Activated CD4-positive, alpha-beta memory T cell treated with anti-CD3 and anti-CD28 coated beads for 36 hours (primary cell): ENCODE measurements at regions of chr12 and their contacts with region 1.

Region 1: GRCh38 chr12:7959701-7960121 is 23.7 kb upstream of the SLC2A3 start:
- DNase-seq: peak; percentile 68
- H3K4me3 Mint-ChIP-seq: peak overlapping the region; percentile 87
- H3K27ac Mint-ChIP-seq: peak overlapping the region; percentile 94
- H3K4me1 Mint-ChIP-seq: peaks cover 33% of the 10 kb centered on the region
- H3K27me3 Mint-ChIP-seq: no peaks in the 10 kb centered on the region

Region 2: GRCh38 chr12:7970475-7971252 is 11.0 kb after region 1 on chr12:
- CTCF ChIA-PET with region 1: interaction called, 31 read pairs
- POLR2A ChIA-PET with region 1: interaction called, 61 read pairs
- intact Hi-C with region 1: loop called (anchors 1 kb)
- DNase-seq: peak; percentile 92
- H3K4me3 Mint-ChIP-seq: peak overlapping the region; percentile 77
- H3K27ac Mint-ChIP-seq: peak overlapping the region; percentile 98
- H3K4me1 Mint-ChIP-seq: peaks cover 34% of the 10 kb centered on the region
- H3K27me3 Mint-ChIP-seq: no peaks in the 10 kb centered on the region

Region 3: DNA sequence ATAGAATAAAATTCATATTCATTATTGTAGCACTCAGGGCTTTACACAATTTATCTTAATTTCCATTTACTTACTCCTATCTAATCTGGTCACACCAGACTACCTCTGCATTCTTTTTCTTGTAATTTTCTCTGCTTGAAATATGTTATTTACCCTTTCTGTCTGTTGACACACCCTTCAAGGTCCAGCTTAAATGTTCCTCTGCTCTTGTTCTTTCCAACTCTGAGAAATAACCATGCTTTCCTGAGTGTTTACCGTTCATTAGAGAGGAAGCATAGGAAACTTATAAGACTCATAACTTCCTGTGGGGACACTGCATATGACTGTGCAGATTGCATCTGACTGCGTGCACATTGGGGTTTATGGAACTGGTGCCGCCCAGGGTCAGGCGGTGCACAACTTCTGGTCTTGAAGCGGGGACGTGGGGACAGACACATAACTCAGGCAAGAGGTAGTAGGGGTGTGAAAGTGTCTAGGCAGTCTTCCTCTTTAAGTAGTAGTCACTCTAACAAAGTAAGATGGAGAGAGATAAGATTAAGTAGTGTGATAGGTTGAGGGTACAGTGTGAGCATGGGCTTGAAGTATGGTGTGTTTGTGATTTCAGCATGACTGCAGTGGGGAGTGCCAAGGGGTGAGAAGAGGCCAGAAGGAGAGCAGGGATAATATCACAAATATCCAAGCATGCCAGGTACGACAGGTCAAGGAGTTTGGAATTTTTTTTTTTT is 30.3 kb after region 1 on chr12:
- CTCF ChIA-PET with region 1: interaction called, 32 read pairs
- POLR2A ChIA-PET with region 1: interaction called, 5 read pairs
- intact Hi-C with region 1: loop called (anchors 1 kb)
- DNase-seq: peak; percentile 90
- H3K4me3 Mint-ChIP-seq: peak overlapping the region; percentile 44
- H3K27ac Mint-ChIP-seq: peak overlapping the region; percentile 87
- H3K4me1 Mint-ChIP-seq: peaks cover 40% of the 10 kb centered on the region
- H3K27me3 Mint-ChIP-seq: no peaks in the 10 kb centered on the region

Region 4: DNA sequence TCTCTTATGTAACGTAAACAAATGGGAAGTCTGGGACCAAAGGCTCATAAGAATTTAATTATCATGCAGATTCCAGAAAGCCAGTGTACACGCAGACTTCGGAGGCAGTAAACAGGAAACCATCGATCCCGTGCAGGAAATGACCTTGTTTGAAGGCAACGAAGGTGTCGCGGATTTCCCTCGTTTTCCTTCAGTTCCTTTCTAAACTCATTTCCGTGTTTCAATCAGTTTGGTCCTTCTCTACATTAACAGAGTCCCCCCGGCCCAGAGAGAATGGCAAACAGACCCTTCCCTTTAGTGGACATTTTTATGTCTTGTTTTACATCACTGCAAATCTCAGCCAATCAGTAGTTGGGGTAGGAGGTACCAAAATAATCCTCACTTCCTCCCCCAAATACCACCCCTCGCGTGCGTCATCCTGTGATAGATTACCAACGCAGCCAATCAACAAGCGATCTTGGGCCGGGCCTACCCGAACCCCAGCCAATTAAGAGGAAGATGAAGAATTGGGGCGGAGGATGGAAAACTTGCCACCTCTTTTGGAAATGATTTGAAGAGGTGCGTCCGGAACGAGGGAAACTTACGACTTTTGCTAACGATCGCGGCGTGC is 66.7 kb after region 1 on chr12:
- CTCF ChIA-PET with region 1: no interaction called
- POLR2A ChIA-PET with region 1: interaction called, 11 read pairs
- intact Hi-C with region 1: loop called (anchors 1 kb)
- DNase-seq: peak; percentile 98
- H3K4me3 Mint-ChIP-seq: peak overlapping the region; percentile 88
- H3K27ac Mint-ChIP-seq: peak overlapping the region; percentile 100
- H3K4me1 Mint-ChIP-seq: peaks cover 9% of the 10 kb centered on the region
- H3K27me3 Mint-ChIP-seq: no peaks in the 10 kb centered on the region